Lower leg skin (tissue), 4 donors: ENCODE measurements at regions of chr3 and their contacts with region 1.

Region 1: DNA sequence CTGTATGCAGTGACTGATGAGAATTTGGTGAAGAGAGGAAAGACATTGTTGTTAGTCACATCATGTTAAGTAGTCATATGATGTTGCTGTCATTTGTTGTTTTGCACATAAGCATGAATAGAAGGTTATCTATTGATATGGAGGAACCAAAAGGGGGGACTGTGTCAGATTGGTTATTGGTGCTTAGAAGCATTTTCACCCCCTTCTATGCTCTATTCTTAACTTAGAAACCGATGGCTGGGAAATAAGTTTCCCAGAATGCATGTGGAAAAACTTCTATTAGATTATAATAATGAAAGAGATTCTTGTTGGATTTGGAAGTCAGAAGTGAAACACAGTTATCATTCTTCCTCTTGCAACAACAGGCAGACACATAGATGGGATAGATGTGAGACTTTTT is 33.2 kb upstream of the CADM2 start:
- DNase-seq: no peak
- H3K4me3 ChIP-seq: no peak overlapping the region
- CTCF ChIP-seq: no peak
- POLR2A ChIP-seq: no peak

Region 2: GRCh38 chr3:84772841-84773240 is 152.7 kb before region 1 on chr3:
- intact Hi-C with region 1: no loop called
- DNase-seq: no peak
- H3K4me3 ChIP-seq: no peak overlapping the region
- CTCF ChIP-seq: no peak
- POLR2A ChIP-seq: no peak

Region 3: GRCh38 chr3:84885199-84885882 is 40.2 kb before region 1 on chr3:
- intact Hi-C with region 1: no loop called
- DNase-seq: no peak
- H3K4me3 ChIP-seq: no peak overlapping the region
- CTCF ChIP-seq: no peak
- POLR2A ChIP-seq: no peak

Region 4: DNA sequence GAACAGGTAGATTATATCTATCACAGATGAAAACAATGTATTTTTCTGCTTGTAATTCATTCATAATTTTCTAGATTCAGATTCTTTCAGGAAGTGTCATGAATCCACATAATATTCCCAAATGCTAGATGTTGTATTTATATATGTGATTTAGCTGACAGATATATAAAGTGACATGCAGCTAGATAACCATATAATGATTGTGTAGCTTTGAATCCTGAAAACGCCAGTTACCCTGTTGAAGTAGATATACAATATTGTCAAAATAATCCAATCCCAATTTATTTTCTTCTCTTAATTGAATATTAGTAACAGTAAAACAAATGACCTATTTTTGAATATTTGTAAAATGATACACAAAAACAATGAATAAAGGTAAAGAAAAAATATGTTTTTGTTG is 771.6 kb after region 1 on chr3:
- intact Hi-C with region 1: loop called (anchors 5 kb)
- DNase-seq: no peak
- H3K4me3 ChIP-seq: no peak overlapping the region
- CTCF ChIP-seq: no peak
- POLR2A ChIP-seq: no peak